ENCODE measurements at regions of chr1 and their contacts with region 1.

Region 1: GRCh38 chr1:94463765-94464330 is 45.7 kb downstream of the ABCD3 start:
- DNase-seq: no peak
- H3K4me3 ChIP-seq: no peak overlapping the region
- H3K27ac ChIP-seq: peak overlapping the region in 3 of 4 donors; percentile 57 to 63 (median 63)
- H3K4me1 ChIP-seq: peaks cover 0 to 17% (median 11%) of the 10 kb centered on the region in 4 donors
- H3K27me3 ChIP-seq: no peaks in the 10 kb centered on the region
- CTCF ChIP-seq: peak; percentile 37 to 61 (median 52)
- EP300 ChIP-seq: no peak
- POLR2A ChIP-seq: no peak

Region 2: DNA sequence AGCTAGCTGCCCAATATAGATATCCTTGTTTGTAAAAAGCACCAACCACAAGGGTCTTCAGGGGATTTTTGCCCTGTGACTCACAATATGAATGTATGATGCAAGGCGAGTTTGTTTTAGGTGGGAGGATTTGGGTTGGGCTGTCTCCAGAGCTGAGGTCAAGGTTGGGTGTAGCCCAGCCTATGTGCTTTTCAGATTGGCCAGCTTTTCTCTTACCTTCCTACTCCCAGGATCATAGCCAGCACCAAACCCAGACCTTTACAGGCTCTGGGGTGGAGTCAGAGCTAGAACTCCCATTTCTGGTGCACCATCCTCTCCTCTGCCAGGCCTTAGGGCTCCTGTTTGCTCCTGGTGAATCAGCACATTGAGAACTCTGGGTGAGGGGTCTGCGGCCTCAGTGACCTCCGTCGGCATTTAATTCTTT is 499.1 kb before region 1 on chr1:
- intact Hi-C with region 1: no loop called
- DNase-seq: no peak
- H3K4me3 ChIP-seq: no peak overlapping the region
- H3K27ac ChIP-seq: no peak overlapping the region
- H3K4me1 ChIP-seq: no peaks in the 10 kb centered on the region
- H3K27me3 ChIP-seq: no peaks in the 10 kb centered on the region
- CTCF ChIP-seq: no peak
- EP300 ChIP-seq: no peak
- POLR2A ChIP-seq: no peak

Region 3: DNA sequence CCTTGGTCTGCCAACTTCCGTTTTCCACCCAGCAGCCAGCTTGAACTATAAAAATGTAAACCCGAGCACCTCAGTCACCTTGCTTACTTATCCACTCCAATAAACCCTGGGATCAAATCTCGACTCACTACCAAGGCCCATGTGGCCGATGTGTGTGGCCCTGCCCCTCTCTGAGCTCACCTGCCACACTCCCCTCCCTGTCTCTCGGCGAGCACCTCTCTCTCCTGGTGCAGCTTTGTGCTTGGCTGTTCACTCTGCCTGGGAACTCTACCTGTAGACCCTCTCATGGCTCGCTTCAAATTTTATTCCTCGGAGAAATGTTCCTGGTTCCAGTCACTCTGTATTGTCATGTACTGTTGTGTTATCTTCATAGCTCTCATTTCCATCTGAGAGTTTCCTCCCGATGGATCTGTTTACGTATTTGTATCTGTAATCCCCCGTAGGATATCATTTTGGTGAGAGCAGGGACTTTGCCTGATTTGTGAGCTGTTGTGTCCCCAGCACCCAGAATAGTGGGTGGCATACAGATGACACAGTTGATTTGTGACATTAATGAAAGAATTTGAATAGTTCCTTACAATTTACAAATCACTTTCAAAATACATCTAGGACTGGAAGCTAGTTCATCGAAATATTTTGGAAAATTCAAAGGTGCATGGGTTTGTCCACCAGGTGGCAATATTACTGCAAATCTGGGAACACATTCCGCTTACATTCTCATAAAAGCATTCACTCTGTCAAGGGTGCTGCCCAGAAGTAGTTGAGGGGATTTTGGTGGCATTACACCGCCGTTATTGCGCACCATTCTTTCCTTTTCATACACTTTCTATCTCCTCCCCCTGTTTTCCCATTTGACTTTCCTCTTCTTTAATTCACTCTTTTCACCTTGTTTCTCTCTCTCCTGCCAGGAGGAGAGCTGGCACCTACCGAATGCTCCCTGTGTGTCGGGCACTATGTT is 438.2 kb before region 1 on chr1:
- intact Hi-C with region 1: loop called (anchors 10 kb)
- DNase-seq: no peak
- H3K4me3 ChIP-seq: no peak overlapping the region
- H3K27ac ChIP-seq: no peak overlapping the region
- H3K4me1 ChIP-seq: peaks cover 0 to 17% (median 9%) of the 10 kb centered on the region in 4 donors
- H3K27me3 ChIP-seq: no peaks in the 10 kb centered on the region
- CTCF ChIP-seq: peak; percentile 62 to 73 (median 68)
- EP300 ChIP-seq: no peak
- POLR2A ChIP-seq: no peak

Region 4: DNA sequence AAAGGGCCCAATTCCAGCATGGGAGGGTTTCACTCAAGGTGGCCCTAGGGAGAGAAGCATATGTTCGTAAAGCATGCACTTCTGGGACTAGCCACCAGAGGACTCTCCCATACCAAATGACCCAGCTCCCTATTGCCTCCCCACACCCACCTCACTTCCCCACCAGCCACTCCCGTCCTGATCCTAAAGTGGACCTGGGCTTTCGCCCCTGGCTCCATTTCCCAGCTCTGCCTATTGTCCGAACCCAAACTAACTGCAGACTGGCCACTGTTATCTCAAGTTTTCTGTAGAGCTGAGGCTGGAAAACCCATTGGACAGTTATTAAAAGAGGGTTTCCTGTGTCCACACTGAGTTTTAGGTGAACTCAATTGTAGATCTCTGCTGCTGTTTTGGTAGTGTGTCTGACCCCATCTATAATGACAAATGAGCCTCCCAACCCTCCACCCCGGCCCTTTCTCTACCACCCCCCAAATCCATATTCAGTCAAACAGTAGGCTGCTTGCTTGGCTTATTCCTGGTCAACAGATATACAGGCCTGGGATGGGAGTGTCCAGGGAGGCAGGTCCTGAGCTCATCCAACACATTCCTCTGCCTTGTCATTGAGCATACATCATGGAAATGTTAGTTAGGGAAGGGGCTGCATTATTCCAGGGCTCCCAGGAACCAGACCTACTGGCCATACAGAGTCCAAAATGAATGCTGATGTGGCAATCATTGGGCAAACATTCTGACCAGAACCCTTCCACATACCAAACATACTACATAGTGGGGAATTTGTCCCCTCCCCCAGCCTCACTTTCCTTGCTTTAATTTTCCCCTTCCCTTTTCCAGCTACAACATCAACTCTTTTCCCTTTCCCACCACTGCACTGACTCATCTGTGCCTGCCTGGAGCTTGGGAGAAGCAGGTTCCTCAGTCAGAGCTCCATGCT is 402.1 kb before region 1 on chr1:
- intact Hi-C with region 1: loop called (anchors 10 kb)
- DNase-seq: peak; percentile 82
- H3K4me3 ChIP-seq: no peak overlapping the region
- H3K27ac ChIP-seq: peak overlapping the region in 2 of 4 donors; percentile 27 to 53
- H3K4me1 ChIP-seq: peaks cover 5 to 34% (median 27%) of the 10 kb centered on the region in 4 donors
- H3K27me3 ChIP-seq: no peaks in the 10 kb centered on the region
- CTCF ChIP-seq: peak; percentile 92 to 98 (median 94)
- EP300 ChIP-seq: no peak
- POLR2A ChIP-seq: no peak

Region 5: GRCh38 chr1:94335950-94336349 is 127.9 kb before region 1 on chr1:
- intact Hi-C with region 1: loop called (anchors 5 kb)
- DNase-seq: peak; percentile 86
- H3K4me3 ChIP-seq: no peak overlapping the region
- H3K27ac ChIP-seq: no peak overlapping the region
- H3K4me1 ChIP-seq: peaks cover 0 to 31% (median 16%) of the 10 kb centered on the region in 4 donors
- H3K27me3 ChIP-seq: no peaks in the 10 kb centered on the region
- CTCF ChIP-seq: peak; percentile 83 to 93 (median 86)
- EP300 ChIP-seq: no peak
- POLR2A ChIP-seq: no peak

Region 6: DNA sequence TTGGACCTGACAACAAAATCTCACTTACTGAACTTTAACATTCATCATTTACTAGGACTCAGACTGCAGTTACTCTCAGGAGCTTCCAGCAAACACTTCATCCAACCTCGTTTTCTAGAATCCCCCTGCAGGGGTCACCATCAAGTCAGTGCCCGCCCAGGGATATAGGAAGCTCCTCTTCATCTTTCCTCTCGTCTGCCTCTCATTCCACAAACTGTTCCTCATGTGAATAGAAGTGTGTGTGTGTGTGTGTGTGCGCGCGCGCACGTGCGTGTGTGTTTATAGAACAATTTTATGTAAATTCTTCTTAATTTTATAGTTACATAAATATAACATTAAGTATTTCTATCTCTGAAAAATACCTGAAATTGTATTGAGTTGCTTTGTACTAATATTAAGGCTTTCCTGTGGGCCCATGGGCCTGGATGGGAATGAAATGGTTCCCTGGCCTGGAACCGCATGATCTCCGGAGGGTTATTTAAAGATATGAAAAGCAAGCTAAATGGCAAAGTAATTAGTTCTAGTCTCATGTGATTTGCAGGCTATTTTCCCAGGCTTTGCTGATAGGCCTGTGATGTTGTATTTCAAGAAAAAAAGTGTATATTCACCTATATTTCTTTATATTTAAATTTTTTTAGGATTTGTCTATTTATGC is 67.4 kb before region 1 on chr1:
- intact Hi-C with region 1: loop called (anchors 5 kb)
- DNase-seq: no peak
- H3K4me3 ChIP-seq: no peak overlapping the region
- H3K27ac ChIP-seq: no peak overlapping the region
- H3K4me1 ChIP-seq: no peaks in the 10 kb centered on the region
- H3K27me3 ChIP-seq: no peaks in the 10 kb centered on the region
- CTCF ChIP-seq: peak in 2 of 4 experiments; percentile 10 to 18
- EP300 ChIP-seq: no peak
- POLR2A ChIP-seq: no peak

Region 7: GRCh38 chr1:94417978-94418663 is 45.7 kb before region 1 on chr1 and contains the start of gene ABCD3:
- intact Hi-C with region 1: loop called (anchors 2 kb)
- DNase-seq: peak; percentile 99
- H3K4me3 ChIP-seq: peak within 1 kb of the TSS; percentile 89 to 97 (median 96)
- H3K27ac ChIP-seq: peak within 1 kb of the TSS; percentile 92 to 96 (median 94)
- H3K4me1 ChIP-seq: peaks cover 0 to 40% (median 32%) of the 10 kb centered on the region in 4 donors
- H3K27me3 ChIP-seq: no peaks in the 10 kb centered on the region
- CTCF ChIP-seq: no peak
- EP300 ChIP-seq: peak in 1 of 4 donors; percentile 22
- POLR2A ChIP-seq: peak; percentile 74 to 79
- total RNA-seq, gene ABCD3: 22.8 to 55.6 (median 31.7) TPM

Measured in sigmoid colon (tissue), 7 donors.